Lower lobe of right lung (tissue), 2 donors: ENCODE measurements at regions of chr17 and their contacts with region 1.

Region 1: GRCh38 chr17:38403491-38403890 is 24.8 kb upstream of the ARHGAP23 start:
- DNase-seq: no peak
- ATAC-seq: no peak
- H3K4me3 ChIP-seq: no peak overlapping the region
- H3K27ac ChIP-seq: no peak overlapping the region
- H3K4me1 ChIP-seq: no peaks in the 10 kb centered on the region
- H3K27me3 ChIP-seq: no peaks in the 10 kb centered on the region
- CTCF ChIP-seq: no peak

Region 2: GRCh38 chr17:38341035-38341721 is 62.3 kb before region 1 on chr17:
- intact Hi-C with region 1: no loop called
- DNase-seq: peak; percentile 64
- ATAC-seq: no peak
- H3K4me3 ChIP-seq: no peak overlapping the region
- H3K27ac ChIP-seq: no peak overlapping the region
- H3K4me1 ChIP-seq: no peaks in the 10 kb centered on the region
- H3K27me3 ChIP-seq: no peaks in the 10 kb centered on the region
- CTCF ChIP-seq: no peak

Region 3: DNA sequence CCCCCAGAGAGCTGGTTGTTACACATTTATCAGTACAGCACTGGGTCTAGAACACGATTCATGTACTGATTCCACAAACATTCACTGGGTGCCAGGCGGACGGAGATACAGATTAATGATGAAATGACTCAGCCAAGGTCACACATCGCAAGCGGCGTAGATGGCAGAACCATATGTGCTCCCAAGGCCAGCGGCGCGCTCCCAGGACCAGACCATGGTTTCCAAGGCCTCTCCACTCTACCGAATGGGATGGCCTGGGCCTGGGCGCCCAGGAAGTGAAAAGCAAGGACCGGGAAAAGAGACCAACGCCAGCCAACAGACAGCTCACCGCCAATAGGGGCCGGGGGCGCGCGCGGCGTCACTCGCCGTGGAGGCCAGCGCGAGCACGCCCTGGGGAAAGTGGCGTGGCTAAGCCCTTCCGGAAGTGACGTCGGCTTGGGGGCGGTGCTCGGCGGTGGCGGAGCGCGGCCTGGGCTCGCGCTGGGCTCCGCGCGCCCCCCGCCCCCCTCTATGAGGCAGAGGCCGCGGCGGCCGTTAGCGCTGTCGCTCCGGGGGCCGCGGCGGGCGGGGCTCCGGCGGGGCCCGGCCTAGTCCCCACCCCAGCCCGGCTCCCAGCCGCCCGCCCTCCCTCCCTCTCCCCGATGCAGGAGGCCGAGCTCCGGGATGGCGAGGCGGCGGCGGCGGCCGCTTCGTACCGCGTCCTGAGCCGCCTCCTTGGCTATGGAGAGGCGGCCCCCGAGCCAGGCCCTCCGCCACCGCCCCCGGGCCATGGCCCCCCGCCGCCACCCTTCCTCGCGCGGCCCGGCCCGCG is 51.9 kb before region 1 on chr17 and contains the start of gene SOCS7:
- intact Hi-C with region 1: loop called (anchors 10 kb)
- DNase-seq: peak; percentile 96
- ATAC-seq: peak; percentile 97
- H3K4me3 ChIP-seq: peak within 1 kb of the TSS; percentile 86
- H3K27ac ChIP-seq: peak within 1 kb of the TSS; percentile 83
- H3K4me1 ChIP-seq: peaks cover 28% of the 10 kb centered on the region
- H3K27me3 ChIP-seq: no peaks in the 10 kb centered on the region
- CTCF ChIP-seq: no peak
- total RNA-seq, gene SOCS7: 23.0 TPM